ENCODE measurements at regions of chr1 and their contacts with region 1.

Region 1: DNA sequence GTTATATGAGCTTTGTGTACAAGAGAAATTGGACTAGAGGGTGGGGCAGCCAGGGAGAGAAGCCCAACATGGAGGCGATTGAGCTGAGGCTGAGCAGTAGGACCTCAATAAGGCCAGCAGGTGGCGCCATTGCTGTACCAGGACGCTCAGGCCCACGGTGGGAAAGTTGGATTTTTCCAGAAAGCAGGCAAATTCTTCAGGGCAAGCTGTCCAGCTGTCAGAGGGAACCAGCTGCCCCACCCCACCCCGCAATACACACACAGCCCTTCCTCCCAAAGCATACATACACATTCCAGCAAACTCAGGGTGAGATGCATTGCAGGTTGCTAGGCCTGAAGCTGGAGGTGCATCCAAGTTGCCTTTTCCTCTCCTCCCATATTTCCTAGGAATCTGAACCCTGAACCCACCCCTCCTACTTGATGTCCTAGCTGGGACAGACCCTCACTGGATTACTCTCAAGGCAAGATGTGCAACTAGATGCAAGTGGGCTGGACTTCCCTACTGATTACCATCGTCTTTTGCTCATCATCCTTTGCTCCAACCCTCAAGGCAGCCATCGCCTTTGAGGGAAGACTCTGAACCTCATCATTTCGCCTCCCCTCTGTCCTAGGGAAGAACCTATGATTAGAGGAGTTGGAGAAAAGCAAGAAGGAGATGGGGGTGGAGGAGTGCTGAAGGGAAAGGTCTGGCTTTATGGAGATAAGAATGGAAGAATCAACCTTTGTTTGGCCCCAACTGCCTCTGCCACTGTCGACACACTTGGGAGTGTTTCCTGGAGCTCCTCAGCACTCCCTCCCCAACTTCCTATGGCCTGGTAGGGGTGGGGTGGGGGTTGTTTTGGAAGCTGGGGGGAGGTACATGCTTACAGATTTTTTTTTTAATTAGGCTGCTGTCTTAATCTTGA is 25.5 kb downstream of the CD34 start:
- DNase-seq: peak; percentile 82
- CTCF ChIP-seq: peak; percentile 94

Region 2: DNA sequence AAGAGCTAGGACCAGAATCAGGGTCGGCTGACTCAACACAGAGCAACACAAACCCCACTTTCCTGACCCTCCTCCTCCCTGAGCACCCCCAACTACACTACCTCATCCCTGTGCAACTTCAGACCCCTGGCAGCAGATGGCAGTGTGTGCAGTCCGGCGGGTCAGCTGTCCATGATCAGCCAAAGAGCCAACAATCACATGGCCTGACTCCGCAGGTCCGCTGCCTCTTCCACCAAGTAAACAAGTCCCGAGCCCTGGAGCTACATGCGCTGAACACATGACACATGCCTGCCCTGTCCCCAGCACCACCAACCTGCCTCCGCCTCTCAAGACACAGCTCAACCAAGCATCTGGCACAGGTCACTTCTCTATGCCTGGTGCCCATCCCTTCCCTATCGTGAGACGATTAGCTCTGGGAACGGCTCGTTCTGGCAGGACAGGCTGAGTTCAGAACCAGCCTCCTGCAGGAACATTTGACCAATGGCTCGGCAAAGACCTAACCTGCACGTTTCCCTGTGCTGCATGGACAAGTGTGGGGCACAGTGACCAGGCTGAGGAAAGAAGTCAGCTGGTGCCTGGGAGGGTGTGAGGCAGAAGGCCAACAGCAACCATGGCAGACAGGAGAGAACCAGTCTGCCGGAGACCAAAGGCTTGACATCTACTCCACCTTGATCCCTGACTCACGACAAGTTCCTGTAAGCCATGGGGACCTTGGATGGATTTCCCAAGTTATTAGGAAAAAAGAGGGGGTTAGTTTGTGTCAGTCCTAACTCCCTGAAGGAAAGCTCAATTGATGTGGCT is 73.3 kb before region 1 on chr1:
- CTCF ChIA-PET with region 1: interaction called, 10 read pairs
- POLR2A ChIA-PET with region 1: no interaction called
- DNase-seq: no peak
- CTCF ChIP-seq: peak; percentile 40

Region 3: GRCh38 chr1:207853372-207853757 is 32.0 kb before region 1 on chr1:
- CTCF ChIA-PET with region 1: interaction called, 11 read pairs
- POLR2A ChIA-PET with region 1: no interaction called
- DNase-seq: no peak
- CTCF ChIP-seq: no peak

Region 4: GRCh38 chr1:207897188-207897587 is 11.8 kb after region 1 on chr1:
- CTCF ChIA-PET with region 1: interaction called, 181 read pairs
- POLR2A ChIA-PET with region 1: no interaction called
- DNase-seq: no peak
- CTCF ChIP-seq: no peak

Region 5: DNA sequence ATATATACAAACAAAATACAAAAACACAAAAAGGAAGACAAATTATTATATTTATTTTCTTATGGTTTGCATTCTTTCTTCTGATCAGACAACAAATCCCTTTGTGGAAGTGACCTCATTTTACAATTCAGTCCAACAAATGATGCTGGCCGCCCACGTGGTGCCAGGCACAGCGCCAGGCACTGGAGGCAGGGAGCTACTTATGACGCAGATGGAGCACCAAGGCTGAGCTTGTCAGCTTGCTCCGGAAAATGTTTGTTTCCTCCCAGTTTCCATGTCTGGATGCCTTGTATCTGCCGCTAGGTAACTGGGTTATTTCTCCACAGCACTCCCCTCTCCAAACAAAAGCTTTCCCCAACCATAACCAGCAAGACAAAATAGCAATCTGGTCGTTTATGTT is 56.3 kb after region 1 on chr1:
- CTCF ChIA-PET with region 1: interaction called, 37 read pairs
- POLR2A ChIA-PET with region 1: no interaction called
- DNase-seq: no peak
- CTCF ChIP-seq: no peak

Region 6: DNA sequence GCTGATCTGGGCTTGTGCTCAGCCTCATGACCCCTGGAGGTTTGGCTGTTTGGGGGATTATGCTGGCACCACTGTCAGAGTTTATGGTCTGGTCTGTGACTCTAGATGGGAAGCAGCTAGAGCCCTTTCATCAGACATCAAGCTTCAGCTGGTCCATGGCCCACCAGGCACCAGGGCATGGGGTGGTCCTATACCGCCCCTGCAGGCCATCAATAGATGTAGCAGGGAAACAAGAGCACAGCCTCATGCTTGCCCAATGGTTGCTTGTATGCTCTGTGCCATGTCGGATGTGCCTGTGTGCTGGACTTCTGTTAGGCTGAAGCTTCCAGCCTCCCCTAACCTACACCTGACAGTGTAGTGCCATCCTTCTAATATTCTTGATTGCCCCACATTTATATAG is 96.6 kb after region 1 on chr1:
- CTCF ChIA-PET with region 1: interaction called, 10 read pairs
- POLR2A ChIA-PET with region 1: no interaction called
- DNase-seq: peak; percentile 36
- CTCF ChIP-seq: peak; percentile 52

Measured in GM10248 (cell line).